Posterior vena cava (tissue), 2 donors: ENCODE measurements at regions of chrX and their contacts with region 1.

Region 1: GRCh38 chrX:39560271-39560670 is 537.5 kb downstream of the BCOR start:
- DNase-seq: no peak

Region 2: DNA sequence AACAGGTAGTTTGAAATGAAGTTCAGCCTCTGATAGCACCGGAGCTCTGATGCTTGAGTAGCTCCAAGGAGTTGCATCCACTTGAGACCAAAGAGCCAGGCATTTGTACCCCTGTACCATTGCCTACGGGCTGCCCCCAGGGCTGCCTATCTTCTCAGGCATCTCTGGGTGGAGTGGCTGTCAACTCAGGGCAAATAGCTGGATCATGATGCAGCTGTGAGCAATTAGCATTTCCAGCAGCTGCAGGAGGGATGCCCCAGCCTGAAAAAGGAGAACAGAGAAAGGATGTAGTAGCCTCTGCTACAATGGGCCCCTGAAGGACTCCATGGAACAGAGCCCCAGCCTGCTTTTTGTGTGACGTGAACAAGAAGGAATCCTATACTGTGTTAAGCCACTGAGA is 44.9 kb after region 1 on chrX:
- intact Hi-C with region 1: no loop called
- DNase-seq: no peak

Region 3: DNA sequence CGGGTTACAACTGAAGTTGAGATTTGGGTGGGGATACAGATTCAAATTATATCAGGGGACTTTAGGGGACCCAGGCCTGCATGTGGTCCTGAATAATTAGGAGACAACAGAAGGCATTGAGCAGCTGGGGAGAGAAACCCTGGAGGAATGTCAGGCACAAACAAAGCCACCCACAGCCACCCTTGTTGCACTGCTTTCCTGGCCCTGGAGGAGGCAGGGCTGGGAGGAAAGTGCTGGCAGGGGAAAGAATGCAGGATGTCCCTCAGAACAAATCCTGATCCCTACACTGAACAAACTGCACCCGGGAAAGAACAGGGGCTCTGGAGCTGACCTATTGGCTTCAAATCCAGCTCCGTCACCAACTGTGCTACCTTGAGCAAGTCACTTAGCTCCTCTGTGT is 806.4 kb after region 1 on chrX:
- intact Hi-C with region 1: no loop called
- DNase-seq: no peak

Region 4: DNA sequence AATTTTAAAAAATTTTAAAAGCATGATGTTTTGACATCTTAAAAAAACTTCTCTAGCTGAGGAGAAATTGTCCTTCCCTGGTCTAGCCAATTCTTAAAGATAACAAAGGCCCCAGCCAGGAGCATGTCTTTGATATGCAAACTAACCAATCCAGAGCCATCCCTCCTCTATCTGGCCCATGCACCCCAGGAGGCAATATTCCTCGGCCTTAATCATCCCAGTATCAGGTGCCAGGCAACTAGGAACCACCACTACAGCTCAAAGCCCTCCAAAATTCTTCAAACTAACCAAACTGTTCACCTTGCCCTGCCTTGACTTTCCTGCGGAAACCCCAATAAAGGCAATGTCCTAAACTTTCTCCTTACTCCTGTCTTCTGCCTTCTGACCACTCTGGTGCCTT is 1427.1 kb after region 1 on chrX:
- intact Hi-C with region 1: loop called in 1 of 2 experiments (anchors 10 kb)
- DNase-seq: no peak